Vagina (tissue), 2 donors: ENCODE measurements at regions of chr1 and their contacts with region 1.

Region 1: DNA sequence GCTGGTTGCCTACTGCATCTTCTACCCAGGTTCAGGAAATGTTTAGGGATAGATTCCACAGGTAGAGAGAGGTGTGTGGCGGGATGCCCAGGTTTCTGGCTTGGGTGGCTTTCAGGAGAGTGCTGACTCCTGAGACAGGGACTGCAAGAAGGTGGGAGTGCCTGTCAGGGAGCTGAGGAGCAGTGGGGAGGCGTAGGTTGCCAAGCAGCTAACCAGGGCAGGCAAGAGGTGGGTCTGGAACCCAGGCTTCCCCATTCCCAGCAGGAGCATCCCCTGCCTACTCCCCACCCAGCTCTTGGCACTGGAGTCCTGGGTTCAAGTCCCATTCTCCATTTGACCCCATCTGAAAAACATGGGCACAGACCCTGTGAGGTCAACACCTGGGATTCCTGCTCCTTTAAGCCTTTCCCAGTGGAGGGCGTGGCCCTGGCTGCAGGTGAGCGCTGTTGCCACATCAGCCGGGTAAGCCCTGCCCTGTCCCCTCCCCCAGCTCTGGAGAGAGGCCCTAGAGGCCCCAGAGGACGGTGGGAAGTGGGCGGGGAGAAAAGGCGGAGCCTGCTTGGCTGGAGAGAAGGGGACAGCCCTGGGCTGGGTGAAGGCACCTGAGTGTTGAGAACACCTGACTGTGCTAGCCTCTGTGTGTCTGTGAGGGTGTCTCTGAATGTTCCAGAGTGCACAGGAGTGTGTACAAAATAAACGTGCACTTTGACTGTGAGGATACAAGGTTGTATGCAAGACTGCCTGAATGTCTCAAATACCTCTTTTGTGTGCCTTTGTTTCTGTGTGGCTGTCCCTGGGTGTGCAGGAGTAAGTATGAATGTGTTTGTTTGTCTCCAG is 14.0 kb upstream of the SYNC start:
- DNase-seq: no peak
- H3K4me3 ChIP-seq: no peak overlapping the region
- H3K27ac ChIP-seq: peak overlapping the region; percentile 62
- H3K4me1 ChIP-seq: peaks cover 4% of the 10 kb centered on the region
- H3K27me3 ChIP-seq: no peaks in the 10 kb centered on the region
- CTCF ChIP-seq: no peak
- POLR2A ChIP-seq: no peak

Region 2: DNA sequence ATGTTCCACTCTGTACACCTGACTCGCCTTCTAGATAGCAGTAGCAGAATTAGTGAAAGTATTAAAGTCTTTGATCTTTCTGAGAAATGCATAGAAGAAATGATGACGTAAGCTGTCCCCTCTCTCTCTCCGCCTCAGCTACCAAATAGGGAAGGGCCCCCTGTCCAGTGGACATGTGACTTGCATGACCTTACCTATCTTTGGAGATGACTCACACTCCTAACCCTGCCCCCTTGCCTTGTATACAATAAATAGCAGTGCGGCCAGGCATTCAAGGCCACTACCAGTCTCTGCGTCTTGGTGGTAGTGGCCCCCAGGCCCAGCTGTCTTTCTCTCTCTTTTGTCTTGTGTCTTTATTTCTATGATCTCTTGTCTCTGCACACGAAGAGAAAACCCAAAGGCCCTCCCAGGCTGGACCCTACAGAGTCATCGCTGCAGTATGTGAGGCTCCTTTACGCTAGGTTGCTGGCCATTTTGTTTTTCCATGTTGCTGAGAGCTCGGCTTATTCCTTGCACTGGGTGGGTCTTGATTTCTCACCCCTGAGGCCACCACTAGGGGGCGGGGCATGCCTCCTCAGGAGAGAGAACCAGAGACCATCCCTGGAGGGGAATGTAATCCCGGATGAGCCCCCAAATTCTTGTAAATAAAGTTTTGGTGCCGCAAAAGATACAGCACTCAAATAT is 267.6 kb before region 1 on chr1:
- intact Hi-C with region 1: no loop called
- DNase-seq: no peak
- H3K4me3 ChIP-seq: no peak overlapping the region
- H3K27ac ChIP-seq: no peak overlapping the region
- H3K4me1 ChIP-seq: no peaks in the 10 kb centered on the region
- H3K27me3 ChIP-seq: no peaks in the 10 kb centered on the region
- CTCF ChIP-seq: no peak
- POLR2A ChIP-seq: no peak

Region 3: DNA sequence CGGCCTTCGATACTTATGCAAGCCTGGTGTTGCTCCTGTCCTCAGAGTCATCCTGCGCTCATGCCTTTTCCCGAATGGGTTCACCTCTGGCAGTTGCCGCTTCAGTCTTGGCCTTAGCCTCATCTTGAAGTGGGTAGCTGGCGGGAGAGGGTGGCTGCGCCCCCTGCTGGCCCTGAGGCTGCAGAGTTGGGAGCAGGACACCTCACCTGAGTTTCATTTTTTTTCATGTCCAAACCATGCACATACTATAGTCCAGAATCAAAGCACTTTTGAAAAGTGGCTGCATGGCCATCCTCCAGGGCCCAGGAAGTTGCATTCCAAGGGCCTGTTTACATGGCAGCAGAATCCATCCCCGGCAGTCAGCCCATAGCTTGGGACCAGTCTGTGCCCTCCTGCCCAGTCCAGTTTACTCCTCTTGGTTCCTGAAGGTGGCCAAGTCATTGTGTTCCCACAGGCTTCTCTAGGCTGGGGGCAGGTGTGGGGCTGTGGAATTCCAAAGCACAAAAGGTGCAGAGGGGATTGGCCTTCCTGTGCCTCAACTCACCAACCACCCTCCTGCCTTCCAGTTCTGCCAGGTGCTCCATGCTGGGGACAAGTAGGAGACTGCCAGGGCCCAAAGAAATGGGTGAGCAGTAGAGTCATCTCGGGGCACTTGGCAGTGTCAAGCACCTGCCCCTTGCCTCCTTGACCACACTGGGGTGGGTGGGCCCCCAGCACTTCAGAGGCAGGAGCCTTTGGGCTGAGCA is 56.7 kb after region 1 on chr1:
- intact Hi-C with region 1: loop called (anchors 5 kb)
- DNase-seq: peak in 1 of 2 donors; percentile 88
- H3K4me3 ChIP-seq: no peak overlapping the region
- H3K27ac ChIP-seq: peak overlapping the region; percentile 36
- H3K4me1 ChIP-seq: peaks cover 34% of the 10 kb centered on the region
- H3K27me3 ChIP-seq: no peaks in the 10 kb centered on the region
- CTCF ChIP-seq: peak; percentile 68 to 78 (median 76)
- POLR2A ChIP-seq: no peak

Region 4: DNA sequence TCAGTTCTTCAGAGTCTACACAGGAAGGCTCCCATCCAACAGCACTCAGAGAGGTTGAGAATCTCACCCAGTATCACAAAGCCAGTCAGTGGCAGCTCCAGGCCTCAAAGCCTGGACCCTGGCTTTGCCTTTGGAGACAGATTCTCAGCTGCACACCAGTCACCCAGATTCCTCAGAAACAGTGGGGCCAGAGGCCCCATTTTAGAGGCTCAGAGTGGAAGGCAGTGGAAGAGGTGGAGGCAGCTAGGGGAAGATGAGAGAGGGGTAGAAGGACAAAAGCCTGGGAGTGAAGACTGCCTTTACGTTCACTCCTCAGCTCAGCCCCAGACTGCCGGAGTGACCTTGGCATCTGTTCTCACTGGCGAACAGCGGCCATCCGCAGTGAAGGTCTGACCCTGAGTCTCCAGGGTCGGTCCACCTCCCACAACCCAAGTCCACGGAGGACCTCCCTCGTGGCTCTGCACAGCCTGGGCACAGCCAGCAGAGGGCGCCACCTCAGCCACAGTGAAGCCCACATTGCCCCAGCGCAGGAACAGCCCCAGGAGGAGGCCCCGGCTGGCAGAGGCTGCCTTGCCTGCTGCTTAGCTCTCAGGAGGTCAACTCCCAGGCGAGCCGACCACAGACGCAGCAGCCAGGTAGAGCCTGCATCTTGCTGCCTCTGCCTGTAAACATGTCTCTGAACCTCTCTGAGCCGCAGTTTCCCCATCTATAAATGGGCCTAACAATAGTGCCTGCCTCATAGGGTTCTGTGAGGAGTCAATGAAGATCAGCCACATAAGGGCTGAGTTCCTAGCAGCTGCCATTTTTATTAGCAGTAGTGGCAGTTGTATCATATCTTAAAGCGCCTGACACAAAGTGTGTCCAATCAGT is 160.0 kb after region 1 on chr1:
- intact Hi-C with region 1: loop called (anchors 10 kb)
- DNase-seq: no peak
- H3K4me3 ChIP-seq: no peak overlapping the region
- H3K27ac ChIP-seq: no peak overlapping the region
- H3K4me1 ChIP-seq: peaks cover 17% of the 10 kb centered on the region
- H3K27me3 ChIP-seq: no peaks in the 10 kb centered on the region
- CTCF ChIP-seq: peak in 2 of 3 experiments; percentile 48 to 50
- POLR2A ChIP-seq: no peak

Region 5: GRCh38 chr1:33111970-33112369 is 395.4 kb after region 1 on chr1:
- intact Hi-C with region 1: no loop called
- DNase-seq: no peak
- H3K4me3 ChIP-seq: no peak overlapping the region
- H3K27ac ChIP-seq: no peak overlapping the region
- H3K4me1 ChIP-seq: no peaks in the 10 kb centered on the region
- H3K27me3 ChIP-seq: no peaks in the 10 kb centered on the region
- CTCF ChIP-seq: no peak
- POLR2A ChIP-seq: no peak